ENCODE measurements at regions of chr2 and their contacts with region 1.

Region 1: DNA sequence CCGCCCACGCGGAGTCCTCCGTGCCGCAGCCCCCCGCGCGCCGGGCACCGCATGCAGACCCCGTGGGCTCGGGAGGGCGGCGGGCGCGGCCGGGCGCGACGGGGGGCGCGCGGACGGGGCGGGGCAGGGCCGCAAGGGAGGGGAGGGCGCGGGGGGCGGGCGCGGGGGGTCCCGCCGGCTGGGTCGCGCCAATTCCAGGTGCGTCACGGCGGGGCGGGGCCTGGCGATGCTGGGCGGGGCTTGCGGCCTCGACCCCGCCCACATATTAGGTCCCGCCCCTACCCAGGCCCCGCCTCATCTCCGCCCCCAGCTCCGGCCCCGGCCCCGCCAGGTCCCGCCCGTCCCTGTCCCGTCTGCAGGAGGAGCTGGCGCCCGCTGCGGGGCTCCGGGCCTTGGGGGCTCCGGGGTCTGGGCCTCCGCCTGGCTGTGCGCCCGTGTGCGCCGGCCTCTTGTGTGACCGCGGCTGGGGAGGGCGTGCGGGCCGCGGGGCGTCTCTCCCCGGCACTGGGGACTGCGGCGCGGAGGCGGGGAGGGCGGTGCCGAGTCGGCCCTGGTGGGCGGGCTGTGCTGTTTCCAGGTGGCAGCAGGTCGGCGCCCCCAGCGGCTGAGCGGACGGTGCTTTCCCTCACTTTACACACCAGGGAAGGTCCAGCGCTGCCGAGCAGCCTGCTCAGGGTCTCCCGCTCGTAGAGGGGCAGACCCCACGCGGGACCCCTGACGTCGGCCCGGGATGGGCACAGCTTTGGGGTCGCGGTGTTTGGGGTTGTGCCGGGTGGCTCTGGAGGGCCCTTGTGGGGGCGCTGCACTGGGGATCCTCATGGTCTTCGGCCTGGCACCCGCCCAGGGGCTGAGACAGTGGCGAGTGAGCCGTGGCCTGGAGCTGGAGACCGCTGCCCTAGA is 543 bp downstream of the ING5 start:
- DNase-seq: peak; percentile 59
- ATAC-seq: peak; percentile 74
- H3K4me3 ChIP-seq: peak overlapping the region; percentile 67 to 69
- H3K27ac ChIP-seq: peak overlapping the region; percentile 99
- H3K4me1 ChIP-seq: peaks cover 14 to 31% of the 10 kb centered on the region in 2 experiments
- H3K27me3 ChIP-seq: no peaks in the 10 kb centered on the region
- CTCF ChIP-seq: peak; percentile 49 to 61 (median 58)
- POLR2A ChIP-seq: no peak
- RAD21 ChIP-seq: no peak

Region 2: DNA sequence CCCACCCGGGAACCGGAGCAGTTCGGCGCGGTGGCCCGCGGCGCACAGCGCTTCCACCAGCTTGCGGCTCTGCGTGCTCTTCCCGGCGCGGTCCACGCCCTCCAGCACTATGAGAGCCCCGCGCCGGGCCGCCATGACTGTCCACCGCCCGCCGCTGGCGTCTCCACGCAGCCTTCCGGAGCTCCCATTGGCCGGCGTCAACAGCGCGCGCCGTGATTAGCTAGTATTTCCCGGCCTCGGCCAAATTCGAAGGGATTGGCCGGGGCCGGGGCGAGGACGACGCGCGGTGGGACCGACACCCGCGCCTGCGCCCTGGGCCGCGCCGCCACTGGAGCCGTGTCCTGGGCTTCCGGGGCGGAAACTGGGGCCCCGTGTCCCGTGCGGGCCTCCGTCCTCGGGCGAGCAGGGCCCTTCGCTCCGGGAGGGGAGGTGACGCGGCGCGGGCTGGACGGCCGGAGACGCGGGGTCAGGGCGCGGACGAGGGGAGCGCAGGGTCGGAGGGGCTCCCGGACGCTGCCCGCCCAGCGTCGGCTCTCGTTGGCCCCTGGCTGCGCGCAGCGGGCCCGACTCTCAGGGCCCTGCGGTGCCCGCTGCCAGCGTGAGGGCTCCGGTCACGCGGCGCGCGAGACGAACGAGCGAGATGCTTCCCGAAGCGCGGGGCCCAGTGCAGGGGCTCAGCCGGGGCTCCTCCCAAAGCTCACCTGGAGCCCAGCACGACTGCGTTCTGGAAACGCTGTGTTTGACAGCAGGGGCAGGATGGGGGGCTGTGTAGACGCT is 15.5 kb before region 1 on chr2 and contains the start of gene DTYMK:
- CTCF ChIA-PET with region 1: interaction called, 3 read pairs
- POLR2A ChIA-PET with region 1: interaction called, 11 read pairs
- RAD21 ChIA-PET with region 1: interaction called in 1 of 2 experiments, 5 read pairs
- intact Hi-C with region 1: loop called (anchors 1 kb)
- DNase-seq: peak; percentile 84
- ATAC-seq: peak; percentile 95
- H3K4me3 ChIP-seq: peak within 1 kb of the TSS; percentile 84 to 86
- H3K27ac ChIP-seq: peak within 1 kb of the TSS; percentile 90
- H3K4me1 ChIP-seq: peaks cover 8 to 23% of the 10 kb centered on the region in 2 experiments
- H3K27me3 ChIP-seq: no peaks in the 10 kb centered on the region
- CTCF ChIP-seq: no peak
- POLR2A ChIP-seq: no peak
- RAD21 ChIP-seq: no peak
- total RNA-seq, gene DTYMK: 83.3 TPM